ENCODE measurements at regions of chr5 and their contacts with region 1.

Region 1: DNA sequence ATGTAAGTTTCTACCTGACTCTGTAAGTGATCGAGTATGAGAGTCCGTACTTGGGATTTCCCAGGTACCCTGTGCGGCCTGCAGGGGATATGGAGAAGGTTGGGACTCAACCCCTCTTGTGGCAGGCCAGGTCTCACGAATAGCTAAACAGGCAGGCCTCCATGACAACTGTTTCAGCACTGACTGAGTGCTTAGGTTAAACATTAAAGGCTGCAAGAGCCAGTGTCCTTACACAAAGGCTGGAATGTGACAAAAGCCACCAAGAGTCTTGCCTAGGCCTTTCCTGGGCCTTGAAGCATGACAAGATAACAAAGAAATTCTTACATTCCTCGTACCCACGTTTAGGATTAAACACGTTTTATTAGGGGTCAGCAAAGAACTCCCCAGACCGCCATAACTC is 58.6 kb downstream of the THBS4 start:
- DNase-seq: peak; percentile 39
- H3K4me3 Mint-ChIP-seq: no peak overlapping the region
- H3K27ac Mint-ChIP-seq: no peak overlapping the region
- H3K4me1 Mint-ChIP-seq: no peaks in the 10 kb centered on the region
- H3K27me3 Mint-ChIP-seq: no peaks in the 10 kb centered on the region
- CTCF ChIP-seq: no peak

Region 2: DNA sequence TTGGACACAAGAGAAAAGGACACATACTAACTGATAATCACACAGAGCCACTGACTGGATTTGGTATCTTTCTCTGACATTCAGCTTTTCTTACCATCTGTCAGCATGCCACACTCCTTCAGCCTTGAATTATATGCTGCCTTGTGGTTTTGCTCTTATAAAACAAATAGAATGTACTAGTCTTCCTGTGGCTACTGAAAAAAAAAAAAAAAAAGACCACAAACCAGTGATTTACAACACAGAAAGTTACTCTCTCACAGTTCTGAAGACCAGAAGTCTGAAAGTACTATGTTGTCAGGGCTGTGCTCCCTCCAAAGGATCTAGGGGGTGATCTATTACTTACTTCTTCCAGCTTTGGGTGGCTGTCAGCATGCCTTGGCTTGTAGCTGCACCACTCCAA is 23.6 kb after region 1 on chr5:
- CTCF ChIA-PET with region 1: no interaction called
- intact Hi-C with region 1: no loop called
- DNase-seq: no peak
- H3K4me3 Mint-ChIP-seq: no peak overlapping the region
- H3K27ac Mint-ChIP-seq: no peak overlapping the region
- H3K4me1 Mint-ChIP-seq: no peaks in the 10 kb centered on the region
- H3K27me3 Mint-ChIP-seq: no peaks in the 10 kb centered on the region
- CTCF ChIP-seq: no peak

Region 3: GRCh38 chr5:80181618-80182211 is 87.9 kb after region 1 on chr5:
- CTCF ChIA-PET with region 1: interaction called, 6 read pairs
- intact Hi-C with region 1: loop called (anchors 10 kb)
- DNase-seq: peak; percentile 90
- H3K4me3 Mint-ChIP-seq: peak overlapping the region; percentile 43
- H3K27ac Mint-ChIP-seq: peak overlapping the region; percentile 93
- H3K4me1 Mint-ChIP-seq: peaks cover 66% of the 10 kb centered on the region
- H3K27me3 Mint-ChIP-seq: no peaks in the 10 kb centered on the region
- CTCF ChIP-seq: no peak

Region 4: GRCh38 chr5:80275347-80275746 is 181.6 kb after region 1 on chr5:
- CTCF ChIA-PET with region 1: interaction called, 12 read pairs
- intact Hi-C with region 1: loop called (anchors 1 kb)
- DNase-seq: peak; percentile 38
- H3K4me3 Mint-ChIP-seq: no peak overlapping the region
- H3K27ac Mint-ChIP-seq: no peak overlapping the region
- H3K4me1 Mint-ChIP-seq: no peaks in the 10 kb centered on the region
- H3K27me3 Mint-ChIP-seq: no peaks in the 10 kb centered on the region
- CTCF ChIP-seq: peak; percentile 33

Region 5: GRCh38 chr5:80308526-80308925 is 214.7 kb after region 1 on chr5:
- CTCF ChIA-PET with region 1: interaction called, 81 read pairs
- intact Hi-C with region 1: loop called (anchors 1 kb)
- DNase-seq: no peak
- H3K4me3 Mint-ChIP-seq: no peak overlapping the region
- H3K27ac Mint-ChIP-seq: no peak overlapping the region
- H3K4me1 Mint-ChIP-seq: no peaks in the 10 kb centered on the region
- H3K27me3 Mint-ChIP-seq: no peaks in the 10 kb centered on the region
- CTCF ChIP-seq: no peak

Region 6: DNA sequence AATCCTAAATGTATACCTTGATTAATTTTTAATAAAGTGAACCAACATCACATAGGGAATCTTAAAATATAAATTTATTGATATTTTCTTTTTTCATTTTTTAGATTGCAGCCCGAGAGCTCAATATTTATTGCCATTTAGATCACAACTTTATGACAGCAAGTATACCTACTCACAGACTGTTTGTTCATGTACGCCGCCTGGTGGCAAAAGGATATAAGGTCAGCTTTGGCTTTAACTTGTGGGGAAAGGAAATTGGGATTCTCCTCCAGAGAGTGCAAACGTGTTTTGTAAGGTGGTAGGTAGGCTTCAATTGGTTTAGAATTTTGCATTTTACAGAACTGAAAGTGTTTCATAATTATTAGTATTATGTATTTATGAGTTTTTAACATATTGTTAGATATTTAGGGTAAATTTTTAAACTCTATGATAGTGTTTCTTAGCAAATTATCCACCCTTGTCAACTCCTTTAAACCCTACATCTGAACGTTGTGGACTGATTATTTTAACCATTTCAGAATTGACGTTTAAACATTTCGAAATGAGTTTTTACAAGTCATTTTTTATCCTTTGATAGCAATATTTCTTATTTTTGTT is 578.4 kb after region 1 on chr5:
- CTCF ChIA-PET with region 1: no interaction called
- intact Hi-C with region 1: loop called (anchors 5 kb)
- DNase-seq: peak; percentile 80
- H3K4me3 Mint-ChIP-seq: no peak overlapping the region
- H3K27ac Mint-ChIP-seq: no peak overlapping the region
- H3K4me1 Mint-ChIP-seq: no peaks in the 10 kb centered on the region
- H3K27me3 Mint-ChIP-seq: no peaks in the 10 kb centered on the region
- CTCF ChIP-seq: peak; percentile 80

Measured in Calu3 (cell line).